AG04449 (cell line): ENCODE measurements at regions of chr10 and their contacts with region 1.

Region 1: DNA sequence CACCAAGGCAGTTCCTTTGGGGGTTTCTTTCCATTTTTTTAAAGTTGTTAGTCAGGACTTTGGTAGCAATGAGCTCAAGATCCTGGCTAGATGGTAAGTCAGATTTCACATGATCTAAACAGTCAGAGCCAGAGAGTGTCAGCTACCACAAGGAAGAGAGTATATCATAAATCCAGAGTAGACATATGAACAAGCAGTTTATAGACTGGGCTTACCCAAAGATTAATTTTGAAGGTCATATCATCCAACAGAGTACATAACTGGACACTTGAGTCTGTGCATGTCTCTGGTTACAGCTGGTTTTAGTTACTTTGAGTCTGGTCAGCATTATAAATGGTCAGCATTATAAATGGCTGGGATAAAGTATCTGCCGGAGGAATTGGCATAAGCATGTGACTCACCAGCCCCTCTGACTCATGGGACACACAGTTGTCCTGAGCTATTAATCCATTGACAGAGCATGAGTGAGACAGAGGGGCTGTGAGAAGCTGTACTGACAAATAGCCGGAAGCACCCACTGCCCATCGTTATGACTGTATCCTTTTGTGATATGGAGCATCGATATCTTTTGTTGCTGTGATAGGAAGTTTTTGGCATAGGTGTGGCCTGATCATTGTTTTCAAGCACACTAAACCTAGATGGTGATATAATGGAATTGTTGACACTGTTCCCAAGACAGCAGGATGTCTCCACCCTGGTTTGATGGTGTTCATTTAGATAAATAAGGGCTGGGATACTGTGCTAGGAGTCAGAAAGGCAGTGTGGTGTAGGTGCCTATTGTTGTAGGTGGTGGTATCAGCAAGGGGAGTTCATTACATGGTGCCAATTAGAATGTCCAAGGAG is 19.2 kb downstream of the PPP1R3C start:
- DNase-seq: peak; percentile 96
- H3K4me3 ChIP-seq: 0 out of 2 replicates have a peak overlapping the region, but pooled peaks have one; percentile 15
- CTCF ChIP-seq: no peak

Region 2: GRCh38 chr10:91493313-91493712 is 120.3 kb before region 1 on chr10:
- CTCF ChIA-PET with region 1: interaction called, 13 read pairs
- POLR2A ChIA-PET with region 1: interaction called, 4 read pairs
- DNase-seq: peak; percentile 16
- H3K4me3 ChIP-seq: no peak overlapping the region
- CTCF ChIP-seq: no peak

Region 3: GRCh38 chr10:91579329-91579985 is 34.2 kb before region 1 on chr10:
- CTCF ChIA-PET with region 1: interaction called, 3 read pairs
- POLR2A ChIA-PET with region 1: interaction called, 10 read pairs
- DNase-seq: no peak
- H3K4me3 ChIP-seq: no peak overlapping the region
- CTCF ChIP-seq: no peak

Region 4: DNA sequence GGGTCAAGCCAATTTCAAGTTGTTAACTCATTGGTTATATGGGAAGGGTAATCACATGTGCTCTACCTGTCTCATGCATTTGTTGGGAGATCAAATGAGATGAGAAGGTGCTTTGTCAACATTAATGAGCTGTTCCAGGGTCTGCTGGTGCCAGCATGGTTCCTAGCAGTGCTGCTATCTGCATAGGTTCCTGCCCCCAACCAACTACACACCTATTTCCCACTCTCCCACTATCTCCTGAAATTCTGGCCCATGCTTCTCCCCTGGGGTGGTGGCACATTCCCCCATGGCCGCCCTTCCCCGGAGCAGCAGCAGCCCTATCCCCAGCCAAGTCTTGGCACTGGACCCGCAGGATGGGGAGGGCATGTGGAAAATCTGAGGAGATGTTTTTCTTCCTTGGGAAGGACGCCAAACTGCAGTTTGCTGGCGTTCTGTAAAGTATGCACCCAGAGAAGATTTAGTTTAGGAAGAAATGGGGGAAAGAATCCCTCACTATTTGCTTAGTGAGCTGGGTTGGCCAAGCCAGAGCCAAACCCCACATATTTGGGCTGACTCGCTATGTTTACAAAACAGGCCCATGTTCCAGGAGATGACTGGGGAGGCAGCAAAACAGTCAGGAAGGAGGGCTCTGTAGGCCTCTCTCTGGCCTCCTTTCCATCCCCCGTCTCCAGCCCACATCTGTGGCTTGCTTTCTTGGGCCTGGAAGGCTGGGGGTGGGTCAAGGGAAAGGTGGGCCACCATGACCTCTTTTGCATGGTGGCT is 23.3 kb before region 1 on chr10:
- CTCF ChIA-PET with region 1: interaction called, 4 read pairs
- POLR2A ChIA-PET with region 1: interaction called, 23 read pairs
- DNase-seq: no peak
- H3K4me3 ChIP-seq: 0 out of 2 replicates have a peak overlapping the region, but pooled peaks have one; percentile 9
- CTCF ChIP-seq: no peak

Region 5: DNA sequence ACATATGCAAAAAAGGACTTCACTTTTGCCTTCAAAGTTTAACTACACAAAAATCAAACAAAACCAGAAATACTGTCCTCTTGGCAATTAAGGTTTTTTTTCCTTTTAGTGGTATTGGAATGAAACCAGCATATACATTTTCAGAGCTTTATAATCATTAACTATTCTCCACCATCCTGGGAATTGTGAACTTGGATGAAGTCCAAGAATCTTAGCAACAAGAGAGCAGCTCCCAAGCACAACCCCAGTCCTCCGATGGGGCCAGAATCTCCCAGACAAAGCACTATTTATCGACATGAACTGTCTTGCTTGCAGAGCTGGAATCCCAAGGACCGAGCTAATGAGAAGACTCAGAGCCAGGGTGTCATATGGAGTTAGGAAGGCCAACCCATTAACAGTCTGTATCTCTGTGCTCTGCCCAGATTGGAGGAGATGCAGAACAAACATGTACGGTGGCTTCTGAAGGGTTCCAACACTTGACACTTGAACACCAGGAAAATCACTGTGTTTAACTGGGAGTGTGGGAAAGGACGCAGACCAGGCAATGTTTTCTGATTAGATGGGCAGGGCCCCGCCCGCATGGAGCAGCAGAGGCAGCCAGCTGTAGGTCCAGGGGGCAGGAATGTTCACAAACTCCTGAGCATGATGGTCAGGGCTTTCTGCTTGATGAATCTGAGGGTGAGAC is 16.3 kb before region 1 on chr10:
- CTCF ChIA-PET with region 1: interaction called, 6 read pairs
- POLR2A ChIA-PET with region 1: interaction called, 11 read pairs
- DNase-seq: no peak
- H3K4me3 ChIP-seq: no peak overlapping the region
- CTCF ChIP-seq: no peak

Region 6: GRCh38 chr10:91627344-91628102 is 13.9 kb after region 1 on chr10:
- CTCF ChIA-PET with region 1: interaction called, 6 read pairs
- POLR2A ChIA-PET with region 1: interaction called, 60 read pairs
- DNase-seq: no peak
- H3K4me3 ChIP-seq: peak overlapping the region; percentile 79
- CTCF ChIP-seq: peak; percentile 3